ENCODE measurements at regions of chr11 and their contacts with region 1.

Region 1: GRCh38 chr11:100855466-100856067 is 168.5 kb downstream of the ARHGAP42 start:
- DNase-seq: peak; percentile 68
- ATAC-seq: peak; percentile 54
- H3K4me3 ChIP-seq: no peak overlapping the region
- H3K27ac ChIP-seq: no peak overlapping the region
- H3K4me1 ChIP-seq: peaks cover 2% of the 10 kb centered on the region
- H3K27me3 ChIP-seq: no peaks in the 10 kb centered on the region
- CTCF ChIP-seq: peak; percentile 71
- POLR2A ChIP-seq: no peak
- RAD21 ChIP-seq: peak; percentile 71

Region 2: GRCh38 chr11:100625041-100625440 is 230.5 kb before region 1 on chr11:
- CTCF ChIA-PET with region 1: interaction called, 10 read pairs
- POLR2A ChIA-PET with region 1: no interaction called
- dilution Hi-C with region 1: no loop called
- in situ Hi-C with region 1: no loop called
- intact Hi-C with region 1: no loop called
- DNase-seq: no peak
- ATAC-seq: peak; percentile 35; the same call in 1 of the 2 replicates
- H3K4me3 ChIP-seq: no peak overlapping the region
- H3K27ac ChIP-seq: no peak overlapping the region
- H3K4me1 ChIP-seq: peaks cover 2% of the 10 kb centered on the region; the same call in 1 of the 2 replicates
- H3K27me3 ChIP-seq: no peaks in the 10 kb centered on the region
- CTCF ChIP-seq: no peak
- POLR2A ChIP-seq: no peak
- RAD21 ChIP-seq: no peak

Region 3: GRCh38 chr11:100663583-100663982 is 192.0 kb before region 1 on chr11:
- CTCF ChIA-PET with region 1: no interaction called
- POLR2A ChIA-PET with region 1: no interaction called
- dilution Hi-C with region 1: no loop called
- in situ Hi-C with region 1: no loop called
- intact Hi-C with region 1: no loop called
- DNase-seq: no peak
- ATAC-seq: no peak
- H3K4me3 ChIP-seq: no peak overlapping the region
- H3K27ac ChIP-seq: no peak overlapping the region
- H3K4me1 ChIP-seq: no peaks in the 10 kb centered on the region
- H3K27me3 ChIP-seq: no peaks in the 10 kb centered on the region
- CTCF ChIP-seq: no peak
- POLR2A ChIP-seq: no peak
- RAD21 ChIP-seq: no peak

Region 4: GRCh38 chr11:100676901-100677300 is 178.7 kb before region 1 on chr11:
- CTCF ChIA-PET with region 1: interaction called, 3 read pairs
- POLR2A ChIA-PET with region 1: no interaction called
- dilution Hi-C with region 1: no loop called
- in situ Hi-C with region 1: no loop called
- intact Hi-C with region 1: loop called (anchors 1 kb)
- DNase-seq: peak; percentile 49
- ATAC-seq: no peak
- H3K4me3 ChIP-seq: no peak overlapping the region
- H3K27ac ChIP-seq: no peak overlapping the region
- H3K4me1 ChIP-seq: peaks cover 8% of the 10 kb centered on the region
- H3K27me3 ChIP-seq: no peaks in the 10 kb centered on the region
- CTCF ChIP-seq: no peak
- POLR2A ChIP-seq: no peak
- RAD21 ChIP-seq: no peak

Region 5: DNA sequence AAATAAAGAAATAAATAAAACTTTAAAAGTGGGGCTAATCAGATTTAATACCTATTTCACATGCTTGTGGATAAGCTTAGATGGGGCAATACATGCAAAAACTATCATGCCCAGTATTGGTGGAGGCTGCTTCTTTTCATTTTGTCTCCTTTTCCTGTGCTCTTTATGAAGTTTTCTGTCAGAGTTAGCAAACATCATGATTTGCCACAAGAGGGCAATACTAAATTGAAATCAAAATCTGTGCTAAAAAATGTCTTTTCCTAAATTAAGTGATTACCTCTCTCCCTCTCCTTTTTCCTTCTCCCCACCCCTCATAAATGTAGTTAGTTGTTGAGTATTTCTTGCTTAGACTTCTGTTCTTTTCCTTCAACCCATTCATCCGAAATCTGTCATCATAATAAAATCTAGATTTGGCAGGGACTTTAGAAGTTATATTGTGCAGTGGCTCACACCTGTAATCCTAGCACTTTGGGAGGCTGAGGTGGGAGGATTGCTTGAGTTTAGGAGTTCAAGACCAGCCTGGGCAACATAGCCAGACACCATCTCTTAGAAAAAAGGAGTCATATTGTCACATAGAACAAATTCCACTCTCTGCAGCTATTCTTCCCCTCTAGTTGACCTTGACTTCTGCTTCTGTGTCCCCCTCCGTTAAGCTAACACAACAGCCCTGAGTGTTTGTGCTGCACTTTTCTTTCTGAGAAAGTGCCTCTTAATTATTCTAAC is 173.2 kb before region 1 on chr11:
- CTCF ChIA-PET with region 1: interaction called, 3 read pairs
- POLR2A ChIA-PET with region 1: no interaction called
- dilution Hi-C with region 1: no loop called
- in situ Hi-C with region 1: loop called (anchors 5 kb)
- intact Hi-C with region 1: loop called (anchors 1 kb)
- DNase-seq: peak; percentile 46
- ATAC-seq: no peak
- H3K4me3 ChIP-seq: no peak overlapping the region
- H3K27ac ChIP-seq: no peak overlapping the region
- H3K4me1 ChIP-seq: peaks cover 2% of the 10 kb centered on the region; the same call in 1 of the 2 replicates
- H3K27me3 ChIP-seq: no peaks in the 10 kb centered on the region
- CTCF ChIP-seq: peak; percentile 62
- POLR2A ChIP-seq: no peak
- RAD21 ChIP-seq: peak; percentile 64

Region 6: DNA sequence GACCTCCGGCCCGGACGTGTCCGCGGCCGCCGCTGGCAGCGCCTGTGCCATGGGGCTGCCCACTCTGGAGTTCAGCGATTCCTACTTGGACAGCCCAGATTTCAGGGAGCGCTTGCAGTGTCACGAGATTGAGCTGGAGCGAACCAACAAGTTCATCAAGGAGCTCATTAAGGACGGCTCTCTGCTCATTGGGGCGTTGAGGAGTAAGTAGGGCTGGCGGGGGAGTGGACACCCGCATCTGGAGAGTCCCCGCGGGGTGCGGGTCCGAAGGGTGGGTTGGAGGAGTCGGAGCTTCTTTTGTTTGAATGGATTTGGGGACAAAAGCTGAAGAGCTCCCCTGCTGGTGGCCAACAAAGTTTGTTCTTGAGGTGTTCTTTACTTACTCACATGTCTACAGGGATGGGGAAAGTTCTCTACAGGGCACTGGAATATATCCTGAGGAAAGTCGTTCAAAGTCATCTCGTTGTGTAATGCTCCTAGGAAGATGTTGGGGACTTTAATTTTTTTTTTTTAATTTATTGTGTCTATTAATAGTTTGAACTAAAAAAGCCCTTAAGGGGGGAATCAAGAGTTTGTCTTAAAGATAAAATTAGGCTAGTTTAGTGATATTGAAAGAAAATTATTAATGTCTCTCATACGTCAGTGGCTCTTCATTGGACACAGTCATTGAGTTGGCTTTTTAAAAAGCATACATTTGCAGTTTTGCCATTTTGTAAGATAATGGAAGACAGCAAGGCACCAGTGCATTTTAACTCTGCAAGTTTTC is 167.8 kb before region 1 on chr11:
- CTCF ChIA-PET with region 1: no interaction called
- POLR2A ChIA-PET with region 1: no interaction called
- dilution Hi-C with region 1: no loop called
- in situ Hi-C with region 1: loop called (anchors 5 kb)
- intact Hi-C with region 1: loop called (anchors 1 kb)
- DNase-seq: peak; percentile 85
- ATAC-seq: peak; percentile 82
- H3K4me3 ChIP-seq: peak overlapping the region; percentile 87
- H3K27ac ChIP-seq: peak overlapping the region; percentile 83
- H3K4me1 ChIP-seq: no peaks in the 10 kb centered on the region
- H3K27me3 ChIP-seq: no peaks in the 10 kb centered on the region
- CTCF ChIP-seq: peak; percentile 63
- POLR2A ChIP-seq: no peak
- RAD21 ChIP-seq: peak; percentile 39

Region 7: DNA sequence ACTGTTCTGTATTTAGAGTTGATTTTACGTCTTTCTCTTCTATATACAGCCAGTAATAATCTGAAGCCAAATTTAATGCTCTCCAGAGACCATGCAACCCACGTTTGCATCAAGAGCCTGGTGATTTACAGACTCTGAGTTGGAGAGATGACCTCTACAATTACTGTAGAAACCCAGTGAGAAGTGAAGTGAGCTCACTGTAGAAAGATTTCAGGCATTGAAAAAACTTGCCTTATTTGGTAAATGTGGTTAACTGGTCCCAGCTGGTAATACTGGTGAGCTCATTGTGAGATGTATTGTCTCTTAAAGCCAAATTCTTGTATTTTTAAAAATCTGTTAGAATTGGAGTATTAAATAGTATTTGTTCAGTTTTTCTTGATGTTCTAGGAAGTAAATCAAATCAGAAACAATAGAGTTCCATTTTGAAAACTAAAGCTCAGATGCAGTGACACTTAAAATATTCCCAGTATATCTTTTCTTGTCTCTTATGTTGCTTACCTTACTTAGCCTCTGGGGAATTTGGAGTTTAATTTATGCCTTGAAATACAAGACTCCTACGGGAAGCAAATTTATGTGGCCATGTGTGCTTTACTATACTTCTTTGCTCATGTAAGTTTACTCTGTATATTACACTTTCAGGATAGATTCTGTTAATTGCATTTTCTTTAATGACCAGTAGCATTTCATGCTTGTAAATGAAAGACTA is 21.4 kb after region 1 on chr11:
- CTCF ChIA-PET with region 1: no interaction called
- POLR2A ChIA-PET with region 1: no interaction called
- dilution Hi-C with region 1: no loop called
- in situ Hi-C with region 1: no loop called
- intact Hi-C with region 1: no loop called
- DNase-seq: peak; percentile 98
- ATAC-seq: peak; percentile 94
- H3K4me3 ChIP-seq: no peak overlapping the region
- H3K27ac ChIP-seq: peak overlapping the region; percentile 100; the same call in 1 of the 2 replicates
- H3K4me1 ChIP-seq: peaks cover 19% of the 10 kb centered on the region
- H3K27me3 ChIP-seq: no peaks in the 10 kb centered on the region
- CTCF ChIP-seq: no peak
- POLR2A ChIP-seq: 0 out of 2 replicates have a peak, but pooled peaks have one; percentile 46
- RAD21 ChIP-seq: no peak

Measured in IMR-90 (cell line).